Activated naive CD4-positive, alpha-beta T cell treated with anti-CD3 and anti-CD28 coated beads for 36 hours (primary cell): ENCODE measurements at regions of chr5 and their contacts with region 1.

Region 1: DNA sequence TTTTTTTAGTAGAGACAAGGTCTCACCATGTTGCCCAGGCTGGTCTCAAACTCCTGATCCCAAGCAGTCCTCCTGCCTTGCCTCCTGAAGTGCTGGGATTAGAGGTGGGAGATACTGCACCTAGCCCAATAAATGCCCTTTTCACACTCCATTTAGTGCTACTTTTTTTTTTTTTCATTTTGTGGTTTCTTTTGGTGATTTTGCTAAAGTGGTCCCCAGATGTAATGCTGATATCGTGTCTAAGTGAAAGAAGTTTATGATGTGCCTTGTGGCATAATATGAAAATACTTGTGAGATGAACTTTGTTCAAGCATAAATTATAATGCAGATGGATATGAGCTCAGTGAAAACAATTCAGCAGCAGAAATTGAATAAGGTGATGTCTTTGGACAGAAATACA is 227.4 kb downstream of the ARHGAP26 start:
- DNase-seq: no peak
- H3K4me3 Mint-ChIP-seq: no peak overlapping the region
- H3K27ac Mint-ChIP-seq: no peak overlapping the region
- H3K4me1 Mint-ChIP-seq: peaks cover 29% of the 10 kb centered on the region
- H3K27me3 Mint-ChIP-seq: no peaks in the 10 kb centered on the region

Region 2: DNA sequence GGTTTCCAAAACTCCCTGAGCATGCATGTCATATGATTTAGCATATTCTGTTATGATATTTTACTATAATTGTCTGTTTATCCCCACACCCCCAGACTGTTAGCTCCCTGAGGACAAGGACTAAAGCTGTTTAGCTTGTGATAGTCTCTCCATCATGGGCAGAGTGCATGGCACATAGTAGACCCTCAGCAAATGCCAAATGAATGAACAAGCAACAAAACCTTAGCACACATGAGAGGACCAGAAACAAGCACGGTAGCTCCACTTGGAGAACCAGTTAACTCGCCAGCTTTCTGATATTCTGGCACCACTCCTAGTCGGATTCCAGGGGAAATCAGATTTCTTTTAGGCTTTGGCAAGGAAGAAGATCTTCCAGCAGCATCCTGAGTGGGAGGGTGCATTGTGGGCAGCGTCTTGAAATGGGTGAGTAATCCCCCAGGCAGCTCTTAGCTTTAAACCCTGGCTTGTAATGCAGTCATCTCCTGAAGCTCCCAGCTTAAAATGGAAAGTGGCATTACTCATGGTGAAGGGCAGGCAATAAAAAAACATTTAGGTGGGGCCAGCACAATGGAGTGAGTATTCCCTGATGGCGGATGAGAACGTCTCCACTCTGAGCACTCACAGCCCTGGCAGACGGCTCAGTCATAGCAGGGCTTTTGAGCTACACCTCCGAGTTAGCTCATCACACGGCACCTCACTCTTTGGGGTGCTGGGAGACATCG is 352.8 kb before region 1 on chr5:
- CTCF ChIA-PET with region 1: no interaction called
- intact Hi-C with region 1: no loop called
- DNase-seq: no peak
- H3K4me3 Mint-ChIP-seq: no peak overlapping the region
- H3K27ac Mint-ChIP-seq: no peak overlapping the region
- H3K4me1 Mint-ChIP-seq: no peaks in the 10 kb centered on the region
- H3K27me3 Mint-ChIP-seq: no peaks in the 10 kb centered on the region

Region 3: DNA sequence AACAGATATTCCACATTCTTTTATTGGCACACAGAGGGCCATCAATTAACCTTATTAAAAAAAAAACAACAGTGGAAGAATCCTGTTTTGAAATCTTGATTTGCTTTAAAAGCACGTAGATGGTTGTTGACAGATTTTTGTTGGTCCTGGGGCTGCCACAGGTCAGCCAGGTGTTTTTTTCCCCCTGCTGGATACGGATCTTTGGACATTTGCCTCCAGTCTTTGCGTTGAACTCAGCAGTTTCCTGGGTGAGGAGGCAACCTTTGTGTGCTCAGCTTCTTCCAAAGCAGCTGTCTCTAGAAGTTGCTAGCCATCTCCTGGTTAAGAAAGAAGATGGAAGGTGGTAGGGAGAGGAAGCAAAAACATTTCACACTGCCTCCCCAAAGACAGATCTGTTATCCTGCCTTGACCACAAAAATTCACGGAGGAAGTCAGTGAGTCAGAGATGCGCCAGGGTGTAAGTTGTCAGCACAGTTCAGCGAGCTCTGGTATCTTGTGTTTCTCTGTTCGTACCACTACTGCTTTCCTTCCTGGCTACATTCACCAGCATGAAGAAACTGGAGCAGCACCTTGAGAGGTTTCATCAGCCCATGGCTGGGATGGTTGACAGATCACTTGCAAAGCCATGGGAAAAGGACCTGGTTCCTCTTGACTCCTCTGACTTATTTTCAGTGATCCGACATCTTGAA is 20.1 kb before region 1 on chr5:
- CTCF ChIA-PET with region 1: interaction called, 7 read pairs
- intact Hi-C with region 1: loop called (anchors 2 kb)
- DNase-seq: peak; percentile 73
- H3K4me3 Mint-ChIP-seq: peak overlapping the region; percentile 8
- H3K27ac Mint-ChIP-seq: peak overlapping the region; percentile 81
- H3K4me1 Mint-ChIP-seq: peaks cover 49% of the 10 kb centered on the region
- H3K27me3 Mint-ChIP-seq: no peaks in the 10 kb centered on the region

Region 4: GRCh38 chr5:143850050-143850683 is 852.6 kb after region 1 on chr5:
- CTCF ChIA-PET with region 1: no interaction called
- intact Hi-C with region 1: no loop called
- DNase-seq: no peak
- H3K4me3 Mint-ChIP-seq: no peak overlapping the region
- H3K27ac Mint-ChIP-seq: no peak overlapping the region
- H3K4me1 Mint-ChIP-seq: peaks cover 2% of the 10 kb centered on the region
- H3K27me3 Mint-ChIP-seq: no peaks in the 10 kb centered on the region